ENCODE measurements at regions of chr1 and their contacts with region 1.

Region 1: DNA sequence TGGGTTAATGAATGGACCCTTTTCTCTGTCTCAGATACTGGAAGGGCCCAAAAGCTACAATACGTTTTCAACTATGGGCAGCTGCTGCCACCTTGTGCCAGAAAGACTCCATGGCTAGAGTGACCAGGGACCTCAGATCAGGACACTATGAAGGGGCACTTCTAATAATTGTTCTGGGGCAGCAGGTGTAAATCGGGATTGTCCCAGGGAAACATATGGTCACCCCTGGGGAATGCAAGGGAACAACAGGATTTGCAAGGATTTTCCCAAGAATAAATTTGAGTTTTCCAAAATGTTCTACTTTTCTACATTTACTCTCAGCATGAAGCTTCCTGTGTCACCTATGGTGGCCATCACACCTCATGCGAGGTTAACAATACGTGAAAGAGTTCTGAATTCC is 12.0 kb upstream of the FCAMR start:
- DNase-seq: peak; percentile 29 to 64 (median 52)
- ATAC-seq: peak; percentile 83
- H3K4me3 ChIP-seq: no peak overlapping the region
- H3K4me3 Mint-ChIP-seq: no peak overlapping the region
- H3K27ac ChIP-seq: no peak overlapping the region
- H3K27ac Mint-ChIP-seq: no peak overlapping the region
- H3K4me1 ChIP-seq: no peaks in the 10 kb centered on the region
- H3K4me1 Mint-ChIP-seq: peaks cover 0 to 3% (median 0%) of the 10 kb centered on the region in 7 donors
- H3K27me3 ChIP-seq: peaks cover 0 to 4% of the 10 kb centered on the region in 2 donors
- H3K27me3 Mint-ChIP-seq: peaks cover 0 to 59% (median 14%) of the 10 kb centered on the region in 5 donors

Region 2: GRCh38 chr1:206635080-206635977 is 346.9 kb before region 1 on chr1 and contains the start of gene DYRK3:
- CTCF ChIA-PET with region 1: interaction called, 23 read pairs
- POLR2A ChIA-PET with region 1: no interaction called
- intact Hi-C with region 1: loop called (anchors 1 to 5 kb)
- DNase-seq: peak; percentile 71 to 98 (median 80)
- ATAC-seq: peak; percentile 97
- H3K4me3 ChIP-seq: peak within 1 kb of the TSS; percentile 67
- H3K4me3 Mint-ChIP-seq: peak within 1 kb of the TSS; percentile 85 to 96 (median 90)
- H3K27ac ChIP-seq: peak within 1 kb of the TSS; percentile 57
- H3K27ac Mint-ChIP-seq: peak within 1 kb of the TSS; percentile 64 to 93 (median 85)
- H3K4me1 ChIP-seq: peaks cover 8 to 16% of the 10 kb centered on the region in 2 donors
- H3K4me1 Mint-ChIP-seq: peaks cover 14 to 29% (median 18%) of the 10 kb centered on the region in 7 donors
- H3K27me3 ChIP-seq: no peaks in the 10 kb centered on the region
- H3K27me3 Mint-ChIP-seq: peaks cover 7 to 13% (median 9%) of the 10 kb centered on the region in 5 donors
- total RNA-seq, gene DYRK3: 0.22 to 8.2 (median 0.69) TPM

Region 3: GRCh38 chr1:206734499-206735142 is 247.6 kb before region 1 on chr1:
- CTCF ChIA-PET with region 1: interaction called, 60 read pairs
- POLR2A ChIA-PET with region 1: interaction called, 9 read pairs
- intact Hi-C with region 1: loop called (anchors 1 kb)
- DNase-seq: peak; percentile 63 to 87 (median 76)
- ATAC-seq: peak; percentile 80
- H3K4me3 ChIP-seq: no peak overlapping the region
- H3K4me3 Mint-ChIP-seq: peak overlapping the region in 4 of 10 donors; percentile 7 to 54 (median 26)
- H3K27ac ChIP-seq: no peak overlapping the region
- H3K27ac Mint-ChIP-seq: peak overlapping the region; percentile 53 to 95 (median 87)
- H3K4me1 ChIP-seq: peaks cover 49 to 50% of the 10 kb centered on the region in 2 donors
- H3K4me1 Mint-ChIP-seq: peaks cover 40 to 60% (median 56%) of the 10 kb centered on the region in 7 donors
- H3K27me3 ChIP-seq: no peaks in the 10 kb centered on the region
- H3K27me3 Mint-ChIP-seq: no peaks in the 10 kb centered on the region

Region 4: GRCh38 chr1:206865013-206865671 is 117.1 kb before region 1 on chr1 and contains the start of gene IL20:
- CTCF ChIA-PET with region 1: interaction called, 24 read pairs
- POLR2A ChIA-PET with region 1: interaction called, 3 read pairs
- intact Hi-C with region 1: loop called (anchors 1 kb)
- DNase-seq: peak; percentile 71 to 92 (median 84)
- ATAC-seq: peak; percentile 97
- H3K4me3 ChIP-seq: no peak within 1 kb of the TSS
- H3K4me3 Mint-ChIP-seq: peak within 1 kb of the TSS in 2 of 10 donors; percentile 3 to 5
- H3K27ac ChIP-seq: no peak within 1 kb of the TSS
- H3K27ac Mint-ChIP-seq: peak within 1 kb of the TSS in 6 of 9 donors; percentile 7 to 53 (median 28)
- H3K4me1 ChIP-seq: no peaks in the 10 kb centered on the region
- H3K4me1 Mint-ChIP-seq: peaks cover 3 to 16% (median 7%) of the 10 kb centered on the region in 7 donors
- H3K27me3 ChIP-seq: no peaks in the 10 kb centered on the region
- H3K27me3 Mint-ChIP-seq: peaks cover 0 to 56% (median 0%) of the 10 kb centered on the region in 5 donors
- total RNA-seq, gene IL20: not detected

Region 5: DNA sequence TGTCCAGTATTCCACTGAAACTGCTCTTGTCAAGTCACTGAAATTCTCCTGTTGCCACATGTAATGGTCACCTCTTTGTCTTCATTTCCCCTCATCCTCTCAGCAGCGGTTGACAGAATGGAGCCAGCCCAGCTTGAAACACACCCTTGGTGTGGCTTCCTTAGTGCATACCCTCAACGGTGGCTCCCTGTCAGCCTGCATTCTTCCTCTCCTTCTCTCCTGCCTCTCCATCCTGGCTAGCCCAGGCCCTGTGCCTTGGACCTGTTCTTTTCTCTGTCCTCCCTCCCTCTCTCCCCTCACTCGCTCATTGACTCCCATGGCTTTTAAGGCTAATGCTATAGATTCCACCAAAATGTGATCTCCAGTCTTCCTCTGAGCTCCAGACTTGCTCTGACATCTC is 64.1 kb before region 1 on chr1:
- CTCF ChIA-PET with region 1: interaction called, 40 read pairs
- POLR2A ChIA-PET with region 1: interaction called, 15 read pairs
- intact Hi-C with region 1: loop called (anchors 2 to 5 kb)
- DNase-seq: no peak
- ATAC-seq: no peak
- H3K4me3 ChIP-seq: peak overlapping the region; percentile 76
- H3K4me3 Mint-ChIP-seq: peak overlapping the region in 1 of 10 donors; percentile 75
- H3K27ac ChIP-seq: peak overlapping the region; percentile 90
- H3K27ac Mint-ChIP-seq: peak overlapping the region in 5 of 9 donors; percentile 12 to 94 (median 91)
- H3K4me1 ChIP-seq: peaks cover 55% of the 10 kb centered on the region in 2 donors
- H3K4me1 Mint-ChIP-seq: peaks cover 54 to 80% (median 57%) of the 10 kb centered on the region in 7 donors
- H3K27me3 ChIP-seq: no peaks in the 10 kb centered on the region
- H3K27me3 Mint-ChIP-seq: no peaks in the 10 kb centered on the region

Region 6: GRCh38 chr1:206971029-206971655 is 11.1 kb before region 1 on chr1:
- CTCF ChIA-PET with region 1: interaction called, 42 read pairs
- POLR2A ChIA-PET with region 1: interaction called, 3 read pairs
- intact Hi-C with region 1: no loop called
- DNase-seq: no peak
- ATAC-seq: peak; percentile 58
- H3K4me3 ChIP-seq: no peak overlapping the region
- H3K4me3 Mint-ChIP-seq: no peak overlapping the region
- H3K27ac ChIP-seq: no peak overlapping the region
- H3K27ac Mint-ChIP-seq: peak overlapping the region in 1 of 9 donors; percentile 37
- H3K4me1 ChIP-seq: peaks cover 0 to 18% of the 10 kb centered on the region in 2 donors
- H3K4me1 Mint-ChIP-seq: peaks cover 20 to 34% (median 22%) of the 10 kb centered on the region in 7 donors
- H3K27me3 ChIP-seq: no peaks in the 10 kb centered on the region
- H3K27me3 Mint-ChIP-seq: peaks cover 0 to 41% (median 0%) of the 10 kb centered on the region in 5 donors

Region 7: DNA sequence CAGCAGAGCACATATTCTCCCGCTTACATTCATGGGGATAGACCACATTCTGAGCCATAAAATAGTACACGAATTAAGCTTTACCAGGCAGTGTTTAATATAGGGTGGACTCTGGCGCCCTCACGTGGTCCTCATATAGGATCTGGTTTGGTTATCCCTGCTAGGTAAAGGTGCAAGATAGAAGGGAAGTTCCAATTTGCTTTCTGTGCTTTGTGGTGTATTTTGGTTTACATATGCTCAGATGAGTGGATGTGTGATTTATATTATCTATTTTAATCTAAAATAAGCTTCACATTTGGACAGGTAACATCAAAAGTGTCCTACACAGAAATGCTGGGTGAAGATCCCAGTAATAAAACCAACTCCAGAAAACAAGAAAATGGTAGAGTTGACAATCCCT is 517.4 kb after region 1 on chr1:
- CTCF ChIA-PET with region 1: interaction called, 3 read pairs
- POLR2A ChIA-PET with region 1: no interaction called
- intact Hi-C with region 1: loop called in 1 of 2 experiments (anchors 5 kb)
- DNase-seq: peak; percentile 29 to 78 (median 65)
- ATAC-seq: peak; percentile 79
- H3K4me3 ChIP-seq: no peak overlapping the region
- H3K4me3 Mint-ChIP-seq: no peak overlapping the region
- H3K27ac ChIP-seq: no peak overlapping the region
- H3K27ac Mint-ChIP-seq: peak overlapping the region in 1 of 9 donors; percentile 59
- H3K4me1 ChIP-seq: peaks cover 0 to 6% of the 10 kb centered on the region in 2 donors
- H3K4me1 Mint-ChIP-seq: peaks cover 6 to 17% (median 11%) of the 10 kb centered on the region in 7 donors
- H3K27me3 ChIP-seq: no peaks in the 10 kb centered on the region
- H3K27me3 Mint-ChIP-seq: peaks cover 5 to 60% (median 23%) of the 10 kb centered on the region in 5 donors